Mammary epithelial cell (primary cell): ENCODE measurements at regions of chr11 and their contacts with region 1.

Region 1: DNA sequence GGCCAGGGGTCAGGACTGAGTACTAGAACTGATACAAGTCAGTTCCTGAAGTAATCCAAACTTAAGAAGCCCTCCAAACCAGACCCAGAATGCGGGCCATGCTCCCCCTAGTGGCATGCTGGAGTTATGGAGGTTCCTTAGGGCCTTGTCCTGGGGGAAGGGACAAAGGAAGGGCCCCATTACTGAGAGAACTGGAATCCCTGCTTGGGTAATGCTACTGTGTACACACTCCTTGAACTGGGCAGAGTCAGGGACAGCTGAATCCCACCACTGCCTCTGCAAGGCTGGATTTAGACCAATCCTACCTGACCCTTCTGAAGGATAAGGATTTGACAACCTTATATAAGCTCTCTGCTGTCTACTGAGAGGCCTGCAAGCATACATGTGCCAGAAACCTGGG is 97.3 kb upstream of the AKIP1 start:
- DNase-seq: peak; percentile 72
- H3K4me3 ChIP-seq: no peak overlapping the region
- H3K27ac ChIP-seq: peak overlapping the region; percentile 94
- H3K4me1 ChIP-seq: peaks cover 46% of the 10 kb centered on the region
- H3K27me3 ChIP-seq: no peaks in the 10 kb centered on the region
- CTCF ChIP-seq: peak; percentile 91 to 93

Region 2: GRCh38 chr11:8604078-8604723 is 209.5 kb before region 1 on chr11:
- CTCF ChIA-PET with region 1: no interaction called
- dilution Hi-C with region 1: no loop called
- in situ Hi-C with region 1: no loop called
- intact Hi-C with region 1: loop called (anchors 2 kb)
- DNase-seq: peak; percentile 100
- H3K4me3 ChIP-seq: no peak overlapping the region
- H3K27ac ChIP-seq: peak overlapping the region; percentile 69
- H3K4me1 ChIP-seq: peaks cover 20% of the 10 kb centered on the region
- H3K27me3 ChIP-seq: no peaks in the 10 kb centered on the region
- CTCF ChIP-seq: peak; percentile 71 to 79

Region 3: DNA sequence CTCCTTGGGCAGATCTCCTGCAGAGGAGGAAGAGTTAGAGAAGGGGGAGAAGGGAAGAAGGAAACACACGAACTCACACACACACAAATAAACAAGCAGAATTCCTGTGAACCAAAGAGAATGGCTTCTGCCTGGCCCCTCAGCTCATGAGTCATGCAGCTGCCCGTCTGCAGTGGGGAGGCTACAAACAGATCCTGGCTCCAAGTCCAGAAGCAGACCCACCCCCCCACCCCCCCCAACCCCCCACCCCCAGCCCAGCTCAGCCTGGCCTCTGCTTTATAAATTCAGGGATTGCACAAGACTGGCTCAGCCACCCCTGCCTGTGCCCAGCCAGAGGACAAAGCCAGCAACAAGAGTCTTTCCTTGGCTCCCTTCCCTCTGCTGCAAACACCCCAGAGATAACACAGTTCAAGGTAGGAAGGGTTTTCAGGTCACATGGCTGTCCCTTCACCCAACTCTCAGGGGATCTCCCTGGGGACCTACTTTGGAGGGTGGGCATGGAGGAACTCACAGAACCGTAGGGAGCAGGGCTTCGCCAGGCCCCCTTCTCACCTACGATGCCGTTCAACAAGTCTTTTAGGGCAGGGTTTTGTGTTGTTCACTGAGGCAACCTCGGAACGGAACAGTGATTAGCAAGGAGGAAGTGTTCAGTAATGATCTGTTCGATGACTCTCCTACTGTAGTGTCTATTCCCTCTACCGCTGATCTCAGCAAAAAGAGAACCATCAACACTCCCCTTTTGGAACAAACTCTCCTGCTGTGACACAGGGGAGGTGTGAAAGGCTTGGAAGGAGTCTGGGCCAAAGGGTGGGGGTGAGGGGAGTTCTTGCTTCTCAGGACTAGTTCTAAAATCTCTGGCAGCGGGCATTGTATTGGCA is 95.5 kb before region 1 on chr11:
- CTCF ChIA-PET with region 1: no interaction called
- dilution Hi-C with region 1: no loop called
- in situ Hi-C with region 1: no loop called
- intact Hi-C with region 1: loop called (anchors 5 kb)
- DNase-seq: peak; percentile 33
- H3K4me3 ChIP-seq: no peak overlapping the region
- H3K27ac ChIP-seq: peak overlapping the region; percentile 46
- H3K4me1 ChIP-seq: peaks cover 61% of the 10 kb centered on the region
- H3K27me3 ChIP-seq: no peaks in the 10 kb centered on the region
- CTCF ChIP-seq: no peak

Region 4: GRCh38 chr11:8832571-8833260 is 19.1 kb after region 1 on chr11:
- CTCF ChIA-PET with region 1: no interaction called
- dilution Hi-C with region 1: no loop called
- in situ Hi-C with region 1: no loop called
- intact Hi-C with region 1: loop called (anchors 1 kb)
- DNase-seq: peak; percentile 90
- H3K4me3 ChIP-seq: no peak overlapping the region
- H3K27ac ChIP-seq: peak overlapping the region; percentile 76
- H3K4me1 ChIP-seq: peaks cover 33% of the 10 kb centered on the region
- H3K27me3 ChIP-seq: no peaks in the 10 kb centered on the region
- CTCF ChIP-seq: no peak

Region 5: DNA sequence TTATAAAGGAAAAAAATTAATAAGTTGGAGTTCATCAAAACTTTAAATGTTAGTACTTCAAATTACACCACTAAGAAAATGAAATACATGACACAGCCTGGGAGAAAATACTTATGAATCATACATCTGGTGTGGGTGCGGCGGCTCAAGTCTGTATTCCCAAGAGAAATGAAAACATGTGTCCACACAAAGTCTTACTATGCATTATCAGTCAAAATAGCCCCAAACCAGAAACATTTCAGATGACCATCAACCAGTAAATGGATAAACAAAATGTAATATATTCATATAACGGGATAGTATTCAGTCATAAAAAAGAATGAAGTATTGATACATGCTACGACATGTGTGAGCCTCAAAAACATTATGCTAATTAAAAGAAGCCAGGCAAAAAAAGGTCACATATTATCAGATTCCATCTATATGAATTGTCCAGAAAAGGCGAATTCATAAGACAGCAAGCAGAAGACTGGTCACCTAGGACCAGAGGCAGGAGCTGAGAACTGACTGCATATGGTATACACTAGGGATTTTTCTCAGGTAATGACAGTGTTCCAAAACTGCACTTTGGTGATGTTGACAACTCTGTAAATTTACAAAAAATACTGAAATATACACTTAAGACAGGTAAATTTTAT is 92.0 kb after region 1 on chr11:
- CTCF ChIA-PET with region 1: no interaction called
- dilution Hi-C with region 1: no loop called
- in situ Hi-C with region 1: loop called in 1 of 2 experiments (anchors 5 kb)
- intact Hi-C with region 1: loop called (anchors 1 kb)
- DNase-seq: peak; percentile 86
- H3K4me3 ChIP-seq: peak overlapping the region in 1 of 3 experiments; percentile 13
- H3K27ac ChIP-seq: peak overlapping the region; percentile 79
- H3K4me1 ChIP-seq: peaks cover 30% of the 10 kb centered on the region
- H3K27me3 ChIP-seq: no peaks in the 10 kb centered on the region
- CTCF ChIP-seq: no peak

Region 6: DNA sequence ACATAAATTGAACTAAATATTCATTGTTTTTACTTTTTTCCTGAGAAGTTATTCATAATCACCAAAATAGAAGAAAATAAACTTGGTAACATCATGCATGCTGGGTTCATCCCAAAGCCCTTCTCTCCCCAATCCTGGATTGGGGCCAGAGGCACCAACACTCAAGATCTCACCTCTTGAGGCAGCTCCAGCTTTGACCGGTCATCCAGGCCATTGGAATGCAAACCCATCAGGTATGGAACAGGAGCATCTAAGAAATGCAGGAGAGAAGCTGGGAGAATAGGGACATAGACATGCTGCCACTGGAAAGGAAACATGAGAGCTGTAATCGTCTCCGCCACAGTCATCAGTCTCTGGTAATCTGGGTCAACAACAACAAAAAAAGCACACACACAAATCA is 379.7 kb after region 1 on chr11:
- CTCF ChIA-PET with region 1: no interaction called
- dilution Hi-C with region 1: no loop called
- in situ Hi-C with region 1: no loop called
- intact Hi-C with region 1: no loop called
- DNase-seq: no peak
- H3K4me3 ChIP-seq: no peak overlapping the region
- H3K27ac ChIP-seq: no peak overlapping the region
- H3K4me1 ChIP-seq: no peaks in the 10 kb centered on the region
- H3K27me3 ChIP-seq: no peaks in the 10 kb centered on the region
- CTCF ChIP-seq: no peak